ENCODE measurements at regions of chrX and their contacts with region 1.

Region 1: DNA sequence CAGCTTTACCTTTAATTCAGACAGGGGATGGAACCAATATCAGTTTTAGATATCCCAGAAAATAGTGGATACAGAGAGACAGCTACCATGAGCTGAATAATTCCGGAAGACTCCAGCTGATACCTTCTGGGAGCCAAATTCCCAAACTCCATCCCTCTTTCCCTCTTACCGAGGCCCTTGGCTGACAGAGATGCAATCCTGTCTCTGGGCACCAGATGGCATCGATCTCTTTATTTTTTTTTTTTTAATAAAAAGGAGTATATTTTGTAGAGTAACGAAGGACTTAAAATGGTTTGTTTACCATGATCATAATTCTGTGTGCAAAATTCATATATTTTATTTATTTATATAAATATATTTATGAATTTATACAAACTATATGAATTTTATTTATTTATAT is 31.0 kb downstream of the RAB40A start:
- DNase-seq: no peak
- H3K4me3 ChIP-seq: no peak overlapping the region
- H3K4me3 Mint-ChIP-seq: no peak overlapping the region
- H3K27ac ChIP-seq: no peak overlapping the region
- H3K27ac Mint-ChIP-seq: no peak overlapping the region
- H3K4me1 ChIP-seq: peaks cover 4% of the 10 kb centered on the region
- H3K4me1 Mint-ChIP-seq: peaks cover 3 to 7% (median 5%) of the 10 kb centered on the region in 4 donors
- H3K27me3 ChIP-seq: no peaks in the 10 kb centered on the region
- H3K27me3 Mint-ChIP-seq: no peaks in the 10 kb centered on the region

Region 2: GRCh38 chrX:103343105-103343504 is 145.2 kb before region 1 on chrX:
- CTCF ChIA-PET with region 1: interaction called, 17 read pairs
- POLR2A ChIA-PET with region 1: no interaction called
- intact Hi-C with region 1: loop called (anchors 1 kb)
- DNase-seq: peak; percentile 32 to 43 (median 36)
- H3K4me3 ChIP-seq: no peak overlapping the region
- H3K4me3 Mint-ChIP-seq: no peak overlapping the region
- H3K27ac ChIP-seq: no peak overlapping the region
- H3K27ac Mint-ChIP-seq: no peak overlapping the region
- H3K4me1 ChIP-seq: peaks cover 5% of the 10 kb centered on the region
- H3K4me1 Mint-ChIP-seq: peaks cover 0 to 3% (median 1%) of the 10 kb centered on the region in 4 donors
- H3K27me3 ChIP-seq: no peaks in the 10 kb centered on the region
- H3K27me3 Mint-ChIP-seq: peaks cover 0 to 1% of the 10 kb centered on the region in 2 donors

Region 3: DNA sequence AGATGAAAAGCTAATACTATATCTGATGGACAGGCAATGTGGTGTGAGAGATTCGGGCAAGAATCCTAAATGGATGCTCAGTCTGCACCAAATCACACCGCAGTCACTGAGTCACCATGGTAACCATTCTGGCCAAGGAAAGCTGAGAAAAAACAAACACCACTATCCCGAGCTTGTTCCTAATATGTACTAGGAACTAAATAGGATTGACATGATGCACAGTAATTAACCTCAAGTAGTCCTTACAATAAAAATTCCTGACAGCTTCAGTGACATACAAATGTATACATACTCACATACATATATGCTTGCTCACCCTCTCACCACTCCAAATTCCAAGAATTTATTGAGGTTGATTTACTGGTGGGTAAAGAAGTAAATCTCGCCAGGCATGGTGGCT is 32.1 kb after region 1 on chrX:
- CTCF ChIA-PET with region 1: no interaction called
- POLR2A ChIA-PET with region 1: no interaction called
- intact Hi-C with region 1: no loop called
- DNase-seq: no peak
- H3K4me3 ChIP-seq: no peak overlapping the region
- H3K4me3 Mint-ChIP-seq: no peak overlapping the region
- H3K27ac ChIP-seq: no peak overlapping the region
- H3K27ac Mint-ChIP-seq: no peak overlapping the region
- H3K4me1 ChIP-seq: no peaks in the 10 kb centered on the region
- H3K4me1 Mint-ChIP-seq: no peaks in the 10 kb centered on the region
- H3K27me3 ChIP-seq: no peaks in the 10 kb centered on the region
- H3K27me3 Mint-ChIP-seq: no peaks in the 10 kb centered on the region

Measured in CD4-positive, alpha-beta memory T cell (primary cell).